ENCODE measurements at regions of chr15 and their contacts with region 1.

Region 1: DNA sequence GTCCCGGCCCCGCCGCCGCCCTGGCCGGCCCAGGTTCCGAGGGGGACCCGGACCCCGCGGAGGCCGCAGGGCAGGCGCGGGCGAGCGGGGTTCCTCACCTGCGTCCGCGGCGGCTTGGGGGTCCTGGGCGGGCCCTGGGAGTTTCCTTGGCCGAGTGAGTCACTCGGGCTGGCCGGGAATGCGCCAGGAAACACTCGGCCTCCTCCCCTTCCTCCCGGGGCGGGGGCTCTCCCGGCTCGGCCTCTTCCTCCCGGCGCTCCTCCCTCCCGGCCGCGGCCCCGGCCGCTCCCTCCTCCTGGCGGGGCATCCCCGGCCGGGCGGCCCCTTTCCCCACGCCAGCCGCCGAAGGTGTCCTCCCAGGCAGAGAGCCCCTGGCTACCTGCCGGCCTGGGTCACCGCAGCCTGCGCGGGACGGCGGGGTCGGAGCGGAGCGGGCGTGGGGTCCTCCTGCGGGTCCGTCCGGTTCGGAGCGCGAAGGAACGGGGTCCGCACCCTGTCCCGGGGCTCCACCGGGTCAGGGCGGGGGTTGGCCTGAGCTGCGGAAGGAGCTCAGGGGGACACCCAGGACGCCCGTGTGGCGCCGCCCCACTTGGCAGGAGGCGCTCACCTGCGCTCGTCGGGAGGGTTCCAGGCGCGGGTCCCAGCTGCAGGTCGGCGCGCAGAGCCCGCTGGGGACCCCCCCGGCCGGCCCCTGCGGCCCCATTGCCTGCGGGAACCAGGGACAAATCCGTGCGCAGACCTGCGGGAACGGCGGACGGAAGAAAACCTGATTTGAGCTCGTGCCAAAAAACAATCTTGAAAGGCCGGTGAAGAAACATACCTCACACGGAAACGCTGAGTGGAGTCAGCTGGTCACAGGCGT is at the start of gene CYFIP1:
- DNase-seq: peak; percentile 83
- H3K4me3 ChIP-seq: peak within 1 kb of the TSS; percentile 72 to 89 (median 80)
- H3K27ac ChIP-seq: peak within 1 kb of the TSS; percentile 36
- H3K4me1 ChIP-seq: peaks cover 9% of the 10 kb centered on the region
- H3K27me3 ChIP-seq: no peaks in the 10 kb centered on the region
- CTCF ChIP-seq: no peak
- POLR2A ChIP-seq: peak; percentile 53
- total RNA-seq, gene CYFIP1: 135 and 158 TPM in 2 replicates

Region 2: GRCh38 chr15:22838292-22839042 is 142.0 kb before region 1 on chr15 and contains the start of gene NIPA2:
- CTCF ChIA-PET with region 1: no interaction called
- POLR2A ChIA-PET with region 1: no interaction called
- dilution Hi-C with region 1: no loop called
- intact Hi-C with region 1: loop called (anchors 2 kb)
- DNase-seq: peak; percentile 99
- H3K4me3 ChIP-seq: peak within 1 kb of the TSS; percentile 69 to 98 (median 87)
- H3K27ac ChIP-seq: peak within 1 kb of the TSS; percentile 92
- H3K4me1 ChIP-seq: peaks cover 15% of the 10 kb centered on the region
- H3K27me3 ChIP-seq: no peaks in the 10 kb centered on the region
- CTCF ChIP-seq: peak in 1 of 2 donors; percentile 12
- POLR2A ChIP-seq: peak; percentile 66
- total RNA-seq, gene NIPA2: 72.9 and 75.7 TPM in 2 replicates

Region 3: GRCh38 chr15:22878103-22878502 is 102.3 kb before region 1 on chr15:
- CTCF ChIA-PET with region 1: no interaction called
- POLR2A ChIA-PET with region 1: no interaction called
- dilution Hi-C with region 1: no loop called
- intact Hi-C with region 1: no loop called
- DNase-seq: no peak
- H3K4me3 ChIP-seq: no peak overlapping the region
- H3K27ac ChIP-seq: no peak overlapping the region
- H3K4me1 ChIP-seq: no peaks in the 10 kb centered on the region
- H3K27me3 ChIP-seq: no peaks in the 10 kb centered on the region
- CTCF ChIP-seq: no peak
- POLR2A ChIP-seq: no peak

Region 4: GRCh38 chr15:22933641-22934061 is 46.8 kb before region 1 on chr15:
- CTCF ChIA-PET with region 1: interaction called, 3 read pairs
- POLR2A ChIA-PET with region 1: no interaction called
- dilution Hi-C with region 1: no loop called
- intact Hi-C with region 1: loop called (anchors 1 kb)
- DNase-seq: peak; percentile 58
- H3K4me3 ChIP-seq: no peak overlapping the region
- H3K27ac ChIP-seq: peak overlapping the region; percentile 71
- H3K4me1 ChIP-seq: peaks cover 4% of the 10 kb centered on the region
- H3K27me3 ChIP-seq: no peaks in the 10 kb centered on the region
- CTCF ChIP-seq: no peak
- POLR2A ChIP-seq: no peak

Region 5: GRCh38 chr15:22961762-22962161 is 18.7 kb before region 1 on chr15:
- CTCF ChIA-PET with region 1: interaction called, 3 read pairs
- POLR2A ChIA-PET with region 1: no interaction called
- dilution Hi-C with region 1: no loop called
- intact Hi-C with region 1: loop called (anchors 1 kb)
- DNase-seq: peak; percentile 66
- H3K4me3 ChIP-seq: peak overlapping the region in 1 of 3 experiments; percentile 4
- H3K27ac ChIP-seq: peak overlapping the region; percentile 45
- H3K4me1 ChIP-seq: peaks cover 33% of the 10 kb centered on the region
- H3K27me3 ChIP-seq: no peaks in the 10 kb centered on the region
- CTCF ChIP-seq: no peak
- POLR2A ChIP-seq: no peak

Region 6: GRCh38 chr15:23003736-23004135 is 23.3 kb after region 1 on chr15:
- CTCF ChIA-PET with region 1: no interaction called
- POLR2A ChIA-PET with region 1: no interaction called
- dilution Hi-C with region 1: no loop called
- intact Hi-C with region 1: no loop called
- DNase-seq: no peak
- H3K4me3 ChIP-seq: no peak overlapping the region
- H3K27ac ChIP-seq: no peak overlapping the region
- H3K4me1 ChIP-seq: no peaks in the 10 kb centered on the region
- H3K27me3 ChIP-seq: no peaks in the 10 kb centered on the region
- CTCF ChIP-seq: no peak
- POLR2A ChIP-seq: no peak